Activated CD4-positive, alpha-beta memory T cell treated with anti-CD3 and anti-CD28 coated beads, Interleukin-2, amount 10 ng/mL, durations not matched to agents 7 days and 5 days (primary cell): ENCODE measurements at regions of chr13 and their contacts with region 1.

Region 1: DNA sequence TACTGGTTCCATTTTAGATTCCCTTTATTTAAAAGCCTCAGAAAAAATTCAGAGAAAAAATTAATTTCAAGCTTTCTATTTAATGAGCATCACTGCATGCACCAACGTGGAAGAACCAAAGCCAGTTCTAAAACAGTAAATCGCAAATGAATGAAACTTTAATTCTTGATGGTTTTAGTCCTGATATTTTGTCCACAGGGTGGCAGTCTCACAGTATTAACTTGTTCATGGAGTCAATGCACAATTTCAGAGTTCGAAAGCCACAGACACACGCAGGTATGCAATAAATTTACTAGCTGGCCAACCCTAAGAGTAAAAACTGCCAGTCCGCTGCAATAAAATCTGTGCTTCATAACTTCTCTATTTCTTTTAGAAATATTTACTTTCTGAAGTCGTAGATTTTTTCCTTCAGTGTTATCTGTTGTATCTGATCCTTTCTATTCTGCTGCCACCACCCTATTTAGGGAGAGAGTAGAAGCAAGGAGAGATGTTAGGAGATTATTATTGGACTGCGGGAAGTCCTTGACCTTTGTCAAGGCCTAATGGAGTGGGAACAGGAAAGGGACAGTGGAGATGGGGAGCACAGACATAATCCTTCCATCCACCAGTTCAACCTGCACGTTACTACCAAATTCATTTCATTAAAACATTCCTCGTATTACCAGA is 7.0 kb upstream of the WBP4 start:
- DNase-seq: peak; percentile 38
- H3K4me3 Mint-ChIP-seq: no peak overlapping the region
- H3K27ac Mint-ChIP-seq: no peak overlapping the region
- H3K4me1 Mint-ChIP-seq: peaks cover 58% of the 10 kb centered on the region
- H3K27me3 Mint-ChIP-seq: no peaks in the 10 kb centered on the region

Region 2: DNA sequence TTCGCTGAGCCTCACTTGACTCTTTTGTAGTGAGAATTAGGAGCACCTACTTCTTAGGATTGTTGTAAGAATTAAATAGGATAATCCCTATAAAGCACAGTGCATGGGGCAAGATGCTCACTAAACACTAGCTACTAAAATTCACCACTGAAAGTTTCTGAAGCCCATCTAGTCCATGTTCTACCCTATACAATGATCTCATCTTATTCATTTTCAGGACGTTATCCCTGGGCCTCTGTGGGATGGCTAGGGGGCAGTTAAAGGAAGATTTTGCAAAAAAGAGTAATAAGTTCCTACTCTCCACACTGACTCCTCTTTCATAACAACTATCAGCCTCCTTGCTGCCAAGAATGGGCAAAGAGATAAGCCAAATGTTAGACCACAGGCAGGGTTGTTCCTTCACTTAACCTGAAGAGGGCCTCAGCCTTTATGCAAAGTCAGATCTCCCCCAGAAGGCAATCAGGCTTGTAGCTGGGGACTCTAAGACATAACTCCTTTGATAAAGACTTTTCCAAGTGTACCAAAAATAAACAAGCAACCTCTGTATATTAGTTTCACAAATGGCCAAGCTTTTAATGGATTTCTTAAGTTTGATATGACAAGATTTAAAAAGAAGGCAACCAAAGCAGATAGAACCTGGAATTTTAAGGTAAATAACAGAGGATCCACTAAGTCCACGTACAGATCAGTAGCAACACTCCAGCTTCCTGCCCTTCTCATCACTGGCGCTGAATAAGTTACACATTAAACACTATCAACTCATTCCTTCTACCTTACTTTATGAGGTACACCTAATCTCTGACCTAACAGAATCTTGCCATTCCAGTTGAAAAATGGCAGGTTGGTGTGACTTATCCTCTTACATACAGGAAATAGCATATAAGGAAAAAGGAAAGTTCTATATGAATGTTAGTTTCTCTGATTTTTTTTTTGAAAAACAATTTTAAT is 79.6 kb before region 1 on chr13:
- CTCF ChIA-PET with region 1: interaction called, 27 read pairs
- POLR2A ChIA-PET with region 1: interaction called, 20 read pairs
- DNase-seq: peak; percentile 36
- H3K4me3 Mint-ChIP-seq: peak overlapping the region; percentile 19
- H3K27ac Mint-ChIP-seq: peak overlapping the region; percentile 47
- H3K4me1 Mint-ChIP-seq: peaks cover 84% of the 10 kb centered on the region
- H3K27me3 Mint-ChIP-seq: no peaks in the 10 kb centered on the region

Region 3: DNA sequence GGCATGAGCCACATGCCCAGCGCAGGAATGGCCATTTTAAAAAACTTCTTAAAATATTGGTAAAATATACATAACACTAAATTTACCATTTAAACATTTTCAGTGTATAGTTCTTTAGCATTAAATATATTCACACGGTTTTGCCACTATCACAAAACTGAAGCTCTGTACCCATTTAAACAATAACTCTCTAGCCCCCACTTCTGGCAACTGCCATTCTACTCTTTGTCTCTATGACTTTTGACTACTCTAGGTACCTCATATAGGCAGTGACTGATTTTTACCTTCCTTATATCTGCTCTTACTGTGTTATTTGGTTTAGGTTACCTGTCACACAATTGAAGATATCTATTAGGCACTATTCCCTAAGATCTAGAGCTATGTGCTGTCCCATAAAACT is 142.3 kb after region 1 on chr13:
- CTCF ChIA-PET with region 1: interaction called, 13 read pairs
- POLR2A ChIA-PET with region 1: no interaction called
- DNase-seq: no peak
- H3K4me3 Mint-ChIP-seq: no peak overlapping the region
- H3K27ac Mint-ChIP-seq: no peak overlapping the region
- H3K4me1 Mint-ChIP-seq: peaks cover 39% of the 10 kb centered on the region
- H3K27me3 Mint-ChIP-seq: no peaks in the 10 kb centered on the region

Region 4: GRCh38 chr13:41222259-41222852 is 168.0 kb after region 1 on chr13:
- CTCF ChIA-PET with region 1: interaction called, 11 read pairs
- POLR2A ChIA-PET with region 1: no interaction called
- DNase-seq: peak; percentile 52
- H3K4me3 Mint-ChIP-seq: no peak overlapping the region
- H3K27ac Mint-ChIP-seq: no peak overlapping the region
- H3K4me1 Mint-ChIP-seq: peaks cover 2% of the 10 kb centered on the region
- H3K27me3 Mint-ChIP-seq: no peaks in the 10 kb centered on the region